Heart right ventricle (tissue), 16 donors: ENCODE measurements at regions of chr2 and their contacts with region 1.

Region 1: DNA sequence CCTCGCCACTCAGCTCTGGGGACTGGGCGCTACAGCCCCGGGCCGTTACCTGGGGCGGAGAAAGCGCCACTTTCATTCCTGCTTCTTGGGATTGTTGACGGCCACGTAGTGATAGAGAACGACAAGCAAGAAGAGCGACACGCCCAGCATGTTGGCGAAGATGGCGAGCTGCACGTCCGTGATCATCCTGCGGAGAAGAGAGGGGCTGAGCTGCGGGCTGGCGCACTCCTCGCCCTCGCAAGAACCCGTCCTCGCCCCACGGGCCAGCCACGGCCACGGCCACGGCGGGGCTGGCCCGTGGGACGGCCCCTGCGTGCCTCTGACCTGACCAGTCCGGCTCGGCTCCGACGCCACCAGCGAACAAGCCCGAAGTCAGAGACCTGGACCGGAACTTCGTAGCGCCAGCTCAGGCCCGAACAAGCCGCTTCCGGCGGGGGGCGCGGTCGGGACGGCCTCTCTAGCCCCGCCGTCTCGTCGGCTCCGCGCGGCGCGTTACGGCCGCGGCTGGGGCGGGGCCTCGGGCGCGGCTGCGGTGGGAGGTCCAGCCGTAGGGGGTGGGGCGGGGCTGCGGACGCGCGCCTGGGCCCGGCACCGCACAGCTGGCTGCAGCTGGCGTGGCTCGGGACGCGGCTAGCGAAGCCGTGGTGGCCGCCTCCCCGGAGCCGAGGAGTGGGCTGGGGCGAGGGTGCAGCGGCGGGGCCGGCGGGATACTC is at the start of gene OST4:
- DNase-seq: peak; percentile 92 to 95
- ATAC-seq: peak; percentile 87 to 96 (median 94)
- H3K4me3 ChIP-seq: peak within 1 kb of the TSS; percentile 50 to 98 (median 89)
- H3K27ac ChIP-seq: peak within 1 kb of the TSS; percentile 70 to 98 (median 97)
- H3K4me1 ChIP-seq: peaks cover 10 to 78% (median 64%) of the 10 kb centered on the region in 9 donors
- H3K27me3 ChIP-seq: no peaks in the 10 kb centered on the region
- CTCF ChIP-seq: peak in 3 of 9 donors; percentile 7 to 41 (median 21)
- total RNA-seq, gene OST4: 342 to 457 (median 388) TPM

Region 2: DNA sequence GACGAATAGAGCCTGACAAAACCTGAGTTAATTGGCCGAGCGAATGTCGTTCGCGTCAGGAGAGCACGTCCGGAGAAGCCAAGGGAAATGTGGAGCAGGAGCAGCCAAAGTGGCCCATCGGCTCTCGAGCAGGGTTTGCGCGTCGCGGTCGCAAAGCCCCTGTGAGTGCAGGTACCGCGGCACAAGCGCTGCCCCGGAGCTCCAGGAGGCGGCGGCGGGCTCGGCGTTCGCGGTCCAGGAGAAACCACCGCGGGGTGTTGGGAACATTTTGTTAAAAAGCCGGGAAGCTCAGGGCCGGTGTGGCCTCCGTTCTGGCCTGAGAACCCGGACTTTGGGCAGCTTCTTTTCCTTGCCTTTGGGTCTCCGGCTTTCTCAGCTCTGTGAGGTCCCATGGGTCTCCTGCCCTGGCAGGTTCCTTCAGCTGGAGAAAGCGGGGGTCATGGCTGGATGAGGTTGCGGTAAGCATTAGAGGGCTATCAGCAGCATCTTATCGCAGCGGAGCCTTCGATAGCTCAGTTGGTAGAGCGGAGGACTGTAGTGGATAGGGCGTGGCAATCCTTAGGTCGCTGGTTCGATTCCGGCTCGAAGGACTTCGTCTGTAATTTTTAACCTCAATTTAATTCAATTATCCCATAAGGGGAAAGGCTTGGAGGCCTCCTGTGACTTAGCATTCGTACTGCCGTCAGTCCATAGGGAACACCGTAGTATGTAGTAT is 21.0 kb before region 1 on chr2:
- intact Hi-C with region 1: loop called in 3 of 10 experiments (anchors 1 to 2 kb)
- DNase-seq: peak; percentile 85 to 95
- ATAC-seq: peak; percentile 79 to 94 (median 90)
- H3K4me3 ChIP-seq: peak overlapping the region; percentile 78 to 97 (median 94)
- H3K27ac ChIP-seq: peak overlapping the region; percentile 15 to 92 (median 88)
- H3K4me1 ChIP-seq: peaks cover 7 to 22% (median 16%) of the 10 kb centered on the region in 9 donors
- H3K27me3 ChIP-seq: no peaks in the 10 kb centered on the region
- CTCF ChIP-seq: peak in 8 of 9 donors; percentile 15 to 59 (median 50)